Thyroid gland (tissue), 4 donors: ENCODE measurements at regions of chr6 and their contacts with region 1.

Region 1: DNA sequence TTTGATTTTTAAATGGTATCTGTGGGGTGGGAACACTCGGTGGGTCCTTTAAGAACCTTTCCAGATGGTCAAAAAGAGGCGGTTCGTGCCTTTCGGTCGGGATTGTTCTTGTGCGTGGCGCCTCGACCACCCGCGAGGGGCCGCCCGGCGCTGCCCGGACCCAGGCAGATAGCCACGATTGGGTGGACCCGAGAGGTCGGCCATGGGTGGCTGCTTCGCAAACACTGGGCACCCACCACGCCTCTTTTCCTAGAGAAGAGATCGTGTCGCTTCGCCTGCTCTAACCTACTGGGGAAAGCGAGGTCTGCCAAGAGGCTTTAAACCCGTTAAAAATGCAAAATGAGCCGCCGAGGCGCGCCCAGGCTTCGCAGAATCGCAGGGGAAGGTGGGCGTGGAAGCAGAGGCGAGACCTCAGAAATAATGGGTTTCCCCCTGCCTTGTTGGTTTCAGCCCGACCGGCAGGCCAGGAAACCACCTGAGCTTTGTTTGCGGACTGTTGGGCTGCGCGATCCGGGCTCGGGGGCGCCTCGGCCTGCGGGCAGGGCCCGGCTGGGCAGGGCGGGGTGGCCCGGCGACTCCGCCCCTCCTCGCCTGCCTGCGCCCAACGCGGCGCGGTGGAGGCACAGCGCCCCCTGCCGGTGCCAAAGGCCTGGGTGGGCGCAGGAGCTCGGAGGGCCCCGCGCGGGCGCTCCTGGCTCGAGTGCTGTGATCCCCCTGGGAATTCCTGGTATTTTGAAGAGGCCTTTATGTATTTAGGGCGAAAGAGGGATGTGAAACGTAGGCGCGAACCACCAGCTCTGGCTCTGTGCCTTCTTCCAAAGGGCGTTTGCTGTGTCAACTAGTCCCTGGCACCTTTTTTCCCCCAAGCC is 1.6 kb downstream of the MARCKS start:
- DNase-seq: peak; percentile 88 to 91
- H3K4me3 ChIP-seq: peak overlapping the region; percentile 54 to 91 (median 82)
- H3K27ac ChIP-seq: peak overlapping the region; percentile 85 to 96 (median 93)
- H3K4me1 ChIP-seq: peaks cover 0 to 5% of the 10 kb centered on the region in 2 donors
- H3K27me3 ChIP-seq: no peaks in the 10 kb centered on the region
- CTCF ChIP-seq: peak; percentile 58 to 99 (median 98)
- POLR2A ChIP-seq: peak; percentile 6 to 93

Region 2: GRCh38 chr6:113306552-113307145 is 552.1 kb before region 1 on chr6:
- intact Hi-C with region 1: loop called (anchors 5 kb)
- DNase-seq: peak; percentile 73 to 81
- H3K4me3 ChIP-seq: no peak overlapping the region
- H3K27ac ChIP-seq: no peak overlapping the region
- H3K4me1 ChIP-seq: no peaks in the 10 kb centered on the region
- H3K27me3 ChIP-seq: no peaks in the 10 kb centered on the region
- CTCF ChIP-seq: peak; percentile 17 to 70 (median 58)
- POLR2A ChIP-seq: no peak

Region 3: GRCh38 chr6:113512576-113512975 is 346.1 kb before region 1 on chr6:
- intact Hi-C with region 1: no loop called
- DNase-seq: no peak
- H3K4me3 ChIP-seq: no peak overlapping the region
- H3K27ac ChIP-seq: no peak overlapping the region
- H3K4me1 ChIP-seq: no peaks in the 10 kb centered on the region
- H3K27me3 ChIP-seq: no peaks in the 10 kb centered on the region
- CTCF ChIP-seq: no peak
- POLR2A ChIP-seq: no peak

Region 4: DNA sequence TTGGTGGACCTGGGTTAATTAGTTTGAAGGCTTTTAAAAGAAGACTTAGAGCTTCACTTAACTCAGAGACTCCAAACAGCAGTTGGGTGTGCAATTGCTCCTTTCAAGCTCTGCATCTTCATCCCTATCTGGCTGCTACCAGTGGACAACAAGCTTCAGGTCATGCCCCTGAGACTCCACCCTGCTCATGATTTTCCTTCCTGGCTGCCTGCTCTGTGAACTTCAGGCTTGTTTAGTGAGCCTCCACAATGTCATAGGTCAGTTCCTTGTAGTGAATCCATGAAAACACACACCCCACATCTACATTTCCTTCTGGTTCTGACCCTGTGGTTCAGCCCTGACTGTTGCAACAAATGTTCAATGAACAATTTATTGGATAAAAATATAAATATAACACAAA is 62.7 kb before region 1 on chr6:
- intact Hi-C with region 1: no loop called
- DNase-seq: no peak
- H3K4me3 ChIP-seq: no peak overlapping the region
- H3K27ac ChIP-seq: no peak overlapping the region
- H3K4me1 ChIP-seq: no peaks in the 10 kb centered on the region
- H3K27me3 ChIP-seq: no peaks in the 10 kb centered on the region
- CTCF ChIP-seq: no peak
- POLR2A ChIP-seq: no peak